Lower leg skin (tissue), 4 donors: ENCODE measurements at regions of chr12 and their contacts with region 1.

Region 1: GRCh38 chr12:56987551-56988053 is 18.7 kb downstream of the ZBTB39 start:
- DNase-seq: peak; percentile 71 to 95
- H3K4me3 ChIP-seq: no peak overlapping the region
- CTCF ChIP-seq: peak in 2 of 3 donors; percentile 53 to 89
- POLR2A ChIP-seq: no peak

Region 2: GRCh38 chr12:56408799-56409417 is 578.7 kb before region 1 on chr12:
- intact Hi-C with region 1: no loop called
- DNase-seq: no peak
- H3K4me3 ChIP-seq: no peak overlapping the region
- CTCF ChIP-seq: no peak
- POLR2A ChIP-seq: no peak

Region 3: GRCh38 chr12:56420411-56420810 is 567.2 kb before region 1 on chr12:
- intact Hi-C with region 1: no loop called
- DNase-seq: no peak
- H3K4me3 ChIP-seq: no peak overlapping the region
- CTCF ChIP-seq: no peak
- POLR2A ChIP-seq: no peak

Region 4: DNA sequence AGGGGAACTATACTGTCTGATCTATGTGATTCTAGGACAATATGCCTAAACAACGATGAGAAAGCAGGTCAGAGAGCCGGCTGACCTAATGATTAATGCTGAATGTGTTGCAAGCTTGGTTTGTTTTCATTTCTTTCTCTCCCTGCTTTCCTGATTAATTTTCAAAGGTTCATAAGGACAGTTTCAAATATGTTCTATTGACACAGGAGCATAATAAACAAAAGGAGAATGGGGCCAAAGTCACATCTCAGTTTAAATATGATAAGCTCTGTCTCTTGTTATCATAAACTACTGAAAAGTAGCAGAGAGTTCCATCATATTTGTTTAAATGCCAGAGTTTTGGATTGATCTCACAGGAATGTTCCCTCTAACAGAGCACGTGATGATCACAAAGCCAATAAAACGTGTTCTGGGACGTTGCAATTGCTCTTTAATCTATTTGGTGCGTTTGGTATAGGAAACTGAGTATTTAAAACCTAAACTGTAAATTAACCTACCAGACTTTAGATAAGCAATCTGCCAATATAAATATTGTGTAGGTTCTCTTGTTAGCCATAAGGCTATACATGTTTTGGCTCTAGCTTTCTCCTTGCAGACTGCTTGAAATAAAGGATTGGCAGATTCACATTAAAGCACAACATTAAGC is 228.2 kb before region 1 on chr12:
- intact Hi-C with region 1: loop called (anchors 5 kb)
- DNase-seq: no peak
- H3K4me3 ChIP-seq: no peak overlapping the region
- CTCF ChIP-seq: no peak
- POLR2A ChIP-seq: no peak

Region 5: DNA sequence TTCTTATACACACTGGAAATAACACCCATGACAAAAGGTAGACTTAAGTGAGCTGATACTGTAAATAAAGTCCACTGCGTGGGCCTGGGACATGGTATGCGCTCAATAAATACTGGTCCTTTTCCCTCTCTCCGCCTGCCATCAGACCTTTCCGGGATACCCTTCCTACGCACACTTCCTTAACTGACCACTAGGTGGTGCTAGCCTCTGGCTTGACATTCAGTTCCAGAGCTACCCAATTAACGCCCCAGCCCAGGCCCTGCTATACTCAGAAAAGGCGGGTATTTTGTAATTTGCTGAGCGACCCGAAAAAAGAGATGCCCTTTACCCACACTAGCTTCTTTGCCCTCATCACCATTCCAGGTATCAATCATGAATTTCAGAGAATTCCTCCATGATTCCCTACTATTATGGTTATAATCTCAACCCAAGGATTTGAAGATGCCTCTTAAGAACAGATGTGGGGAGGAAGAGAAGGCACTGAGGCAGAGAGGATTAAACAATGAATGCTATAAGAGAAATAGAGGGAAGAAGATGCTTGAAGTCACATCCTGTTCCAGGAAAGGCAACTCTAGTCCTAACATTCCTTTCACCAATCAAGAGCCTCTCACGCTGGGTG is 136.8 kb after region 1 on chr12:
- intact Hi-C with region 1: no loop called
- DNase-seq: peak; percentile 76 to 94
- H3K4me3 ChIP-seq: no peak overlapping the region
- CTCF ChIP-seq: peak in 1 of 3 donors; percentile 98
- POLR2A ChIP-seq: no peak